Mammary epithelial cell (primary cell): ENCODE measurements at regions of chr17 and their contacts with region 1.

Region 1: GRCh38 chr17:82528484-82529265 is 9.1 kb downstream of the FOXK2 start:
- DNase-seq: peak; percentile 87
- H3K4me3 ChIP-seq: peak overlapping the region in 1 of 3 experiments; percentile 5
- H3K27ac ChIP-seq: peak overlapping the region; percentile 89
- H3K4me1 ChIP-seq: peaks cover 50% of the 10 kb centered on the region
- H3K27me3 ChIP-seq: no peaks in the 10 kb centered on the region
- CTCF ChIP-seq: peak; percentile 90 to 93

Region 2: GRCh38 chr17:82358465-82359350 is 170.0 kb before region 1 on chr17 and contains the start of gene TEX19:
- CTCF ChIA-PET with region 1: no interaction called
- dilution Hi-C with region 1: loop called (anchors 5 kb)
- in situ Hi-C with region 1: loop called in 1 of 2 experiments (anchors 5 kb)
- intact Hi-C with region 1: no loop called
- DNase-seq: no peak
- H3K4me3 ChIP-seq: no peak within 1 kb of the TSS
- H3K27ac ChIP-seq: no peak within 1 kb of the TSS
- H3K4me1 ChIP-seq: peaks cover 16% of the 10 kb centered on the region
- H3K27me3 ChIP-seq: peaks cover 1% of the 10 kb centered on the region
- CTCF ChIP-seq: no peak
- total RNA-seq, gene TEX19: not detected

Region 3: GRCh38 chr17:82450170-82451106 is 78.2 kb before region 1 on chr17 and contains the start of gene CYBC1:
- CTCF ChIA-PET with region 1: no interaction called
- dilution Hi-C with region 1: no loop called
- in situ Hi-C with region 1: no loop called
- intact Hi-C with region 1: loop called (anchors 2 kb)
- DNase-seq: peak; percentile 84
- H3K4me3 ChIP-seq: peak within 1 kb of the TSS; percentile 87 to 98 (median 98)
- H3K27ac ChIP-seq: peak within 1 kb of the TSS; percentile 73
- H3K4me1 ChIP-seq: peaks cover 18% of the 10 kb centered on the region
- H3K27me3 ChIP-seq: no peaks in the 10 kb centered on the region
- CTCF ChIP-seq: no peak
- total RNA-seq, gene CYBC1: 21.8 to 38.3 TPM

Region 4: DNA sequence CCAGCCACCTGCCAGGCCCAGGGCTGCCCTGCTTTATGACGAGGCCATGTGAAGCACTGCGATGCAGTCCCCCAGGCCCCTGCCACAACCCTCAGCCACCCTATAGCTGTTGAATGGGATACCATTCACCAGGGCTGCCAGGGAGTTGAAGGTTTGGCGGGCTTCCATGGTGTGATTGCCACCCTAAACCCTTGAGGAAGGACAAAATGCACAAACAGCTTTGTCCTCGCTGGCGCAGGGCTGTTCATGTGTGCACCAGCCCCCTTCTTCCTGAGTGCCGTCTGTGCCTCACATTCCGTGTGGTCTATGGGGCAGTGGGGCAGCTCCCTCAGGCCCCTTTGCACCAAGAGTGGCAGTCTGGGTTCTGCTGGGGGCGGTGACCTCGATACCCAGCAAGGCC is 44.8 kb before region 1 on chr17:
- CTCF ChIA-PET with region 1: no interaction called
- dilution Hi-C with region 1: no loop called
- in situ Hi-C with region 1: no loop called
- intact Hi-C with region 1: loop called (anchors 2 kb)
- DNase-seq: no peak
- H3K4me3 ChIP-seq: no peak overlapping the region
- H3K27ac ChIP-seq: no peak overlapping the region
- H3K4me1 ChIP-seq: peaks cover 6% of the 10 kb centered on the region
- H3K27me3 ChIP-seq: no peaks in the 10 kb centered on the region
- CTCF ChIP-seq: no peak

Region 5: DNA sequence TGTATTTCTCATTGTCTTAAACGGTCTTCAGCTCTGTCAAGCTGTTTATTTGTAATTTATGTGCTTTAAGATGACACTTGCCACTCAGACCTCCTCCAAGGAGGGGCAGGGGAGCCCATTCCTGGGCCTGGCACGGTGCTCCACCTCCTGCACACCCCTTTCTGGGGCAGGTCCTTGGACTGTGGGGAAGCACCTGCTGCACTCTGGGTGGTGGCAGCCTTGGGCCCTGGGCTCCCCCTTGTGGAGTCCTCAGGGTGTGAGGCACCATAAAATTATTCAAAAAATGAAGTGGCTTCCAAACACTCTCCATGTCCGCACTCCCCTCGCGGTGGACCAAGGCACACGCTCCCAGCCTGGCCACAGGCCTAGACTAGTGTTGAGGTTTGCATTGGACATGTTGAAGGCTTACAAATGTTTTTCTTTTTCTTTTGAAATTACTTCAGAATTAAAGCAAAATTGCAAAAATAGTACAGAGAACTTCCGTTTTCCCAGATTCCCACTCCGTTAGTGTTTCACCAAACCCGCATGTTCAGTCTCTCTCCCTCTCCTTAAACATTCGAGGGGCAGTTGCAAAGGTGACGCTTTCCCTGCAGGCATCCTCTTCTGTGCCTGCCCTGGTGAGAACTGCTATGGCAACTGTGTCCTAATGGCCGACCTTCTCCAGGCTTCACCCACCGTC is 23.2 kb after region 1 on chr17:
- CTCF ChIA-PET with region 1: interaction called, 3 read pairs
- dilution Hi-C with region 1: no loop called
- in situ Hi-C with region 1: no loop called
- intact Hi-C with region 1: loop called (anchors 1 kb)
- DNase-seq: peak; percentile 74
- H3K4me3 ChIP-seq: no peak overlapping the region
- H3K27ac ChIP-seq: no peak overlapping the region
- H3K4me1 ChIP-seq: peaks cover 12% of the 10 kb centered on the region
- H3K27me3 ChIP-seq: no peaks in the 10 kb centered on the region
- CTCF ChIP-seq: peak; percentile 63 to 86

Region 6: GRCh38 chr17:82582213-82582612 is 53.5 kb after region 1 on chr17:
- CTCF ChIA-PET with region 1: no interaction called
- dilution Hi-C with region 1: no loop called
- in situ Hi-C with region 1: no loop called
- intact Hi-C with region 1: no loop called
- DNase-seq: no peak
- H3K4me3 ChIP-seq: no peak overlapping the region
- H3K27ac ChIP-seq: no peak overlapping the region
- H3K4me1 ChIP-seq: no peaks in the 10 kb centered on the region
- H3K27me3 ChIP-seq: no peaks in the 10 kb centered on the region
- CTCF ChIP-seq: no peak

Region 7: GRCh38 chr17:82593590-82594087 is 65.0 kb after region 1 on chr17:
- CTCF ChIA-PET with region 1: no interaction called
- dilution Hi-C with region 1: no loop called
- in situ Hi-C with region 1: no loop called
- intact Hi-C with region 1: no loop called
- DNase-seq: no peak
- H3K4me3 ChIP-seq: peak overlapping the region; percentile 57 to 64 (median 63)
- H3K27ac ChIP-seq: peak overlapping the region; percentile 11
- H3K4me1 ChIP-seq: peaks cover 16% of the 10 kb centered on the region
- H3K27me3 ChIP-seq: no peaks in the 10 kb centered on the region
- CTCF ChIP-seq: no peak

Region 8: GRCh38 chr17:82775001-82775823 is 246.5 kb after region 1 on chr17:
- CTCF ChIA-PET with region 1: no interaction called
- dilution Hi-C with region 1: no loop called
- in situ Hi-C with region 1: no loop called
- intact Hi-C with region 1: no loop called
- DNase-seq: no peak
- H3K4me3 ChIP-seq: peak overlapping the region in 1 of 3 experiments; percentile 29
- H3K27ac ChIP-seq: no peak overlapping the region
- H3K4me1 ChIP-seq: no peaks in the 10 kb centered on the region
- H3K27me3 ChIP-seq: no peaks in the 10 kb centered on the region
- CTCF ChIP-seq: peak; percentile 68 to 92